Posterior vena cava (tissue), 2 donors: ENCODE measurements at regions of chr22 and their contacts with region 1.

Region 1: DNA sequence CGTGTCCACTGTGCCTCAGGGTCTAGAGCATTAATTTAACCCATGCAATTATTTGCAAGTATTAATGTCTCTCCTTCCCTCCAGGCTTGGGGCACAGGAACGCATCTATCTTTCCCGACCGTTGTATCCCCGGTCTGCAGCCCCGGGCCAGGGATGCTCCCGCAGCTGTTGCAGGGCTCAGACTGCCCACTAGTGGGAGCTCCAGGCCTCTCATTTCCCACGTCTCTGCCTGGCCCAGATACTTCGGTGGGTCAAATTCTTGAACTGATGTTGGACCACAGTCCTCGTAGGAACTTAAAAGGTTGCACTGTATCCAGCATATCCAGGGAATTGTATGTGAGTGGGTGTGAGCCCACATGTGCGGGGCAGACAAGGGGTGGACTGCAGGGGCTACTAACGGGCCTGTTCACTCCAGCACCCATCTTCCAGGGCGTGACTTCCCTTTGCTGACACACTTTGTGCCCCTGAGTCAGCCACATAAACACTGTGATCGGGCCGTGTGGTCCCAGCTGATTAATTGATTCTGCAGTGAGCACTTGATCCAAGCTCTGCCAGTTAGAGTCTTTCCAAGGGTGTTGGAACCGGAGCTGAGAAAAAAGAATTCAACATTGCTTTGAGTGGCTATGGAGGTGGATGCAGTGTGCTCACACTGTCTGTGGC is 451.3 kb downstream of the TBC1D22A start:
- DNase-seq: peak; percentile 31

Region 2: DNA sequence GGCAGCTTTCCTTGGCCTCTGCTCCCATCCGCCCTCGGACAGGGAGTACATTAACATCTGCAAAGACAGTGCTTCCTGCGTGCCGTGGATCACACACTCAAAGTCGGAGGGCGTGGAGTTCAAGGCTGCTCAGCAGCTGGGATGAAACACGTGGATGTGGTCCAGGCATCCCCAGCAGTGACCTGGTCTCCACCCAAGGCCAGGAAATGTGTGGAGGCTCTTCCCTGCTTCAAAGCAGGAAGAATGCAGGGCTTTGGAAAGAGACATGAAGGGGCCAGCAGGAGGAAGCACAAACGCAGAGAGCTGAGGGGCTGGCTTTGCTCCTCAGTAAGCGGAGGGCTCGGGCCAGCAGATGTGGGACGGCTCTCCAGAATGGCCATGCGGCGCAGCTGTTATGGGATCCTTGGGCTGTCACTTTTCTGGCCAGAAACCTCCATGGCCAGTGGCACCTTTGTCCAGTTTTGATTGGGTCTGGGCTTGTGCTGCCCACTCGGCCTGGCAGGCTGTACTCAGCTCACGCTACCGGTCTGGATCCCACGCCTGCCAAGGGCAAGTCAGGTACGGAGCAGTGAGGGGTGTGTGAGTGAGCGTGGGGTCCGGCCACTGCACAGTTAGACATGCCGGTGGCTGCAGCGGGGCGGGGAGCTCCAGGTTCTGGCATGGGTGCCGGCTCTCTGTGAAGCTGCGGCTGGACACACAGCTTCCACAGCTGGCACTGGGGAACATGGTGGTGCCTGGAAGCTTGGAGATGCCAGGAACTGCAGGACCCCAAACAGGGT is 13.2 kb before region 1 on chr22:
- intact Hi-C with region 1: loop called in 1 of 2 experiments (anchors 1 kb)
- DNase-seq: peak; percentile 78

Region 3: GRCh38 chr22:47275489-47276451 is 62.1 kb after region 1 on chr22:
- intact Hi-C with region 1: no loop called
- DNase-seq: peak; percentile 40